ENCODE measurements at regions of chr4 and their contacts with region 1.

Region 1: GRCh38 chr4:145216535-145216934 is 36.1 kb upstream of the OTUD4 start:
- DNase-seq: no peak
- H3K4me3 ChIP-seq: no peak overlapping the region
- H3K27ac ChIP-seq: no peak overlapping the region
- H3K4me1 ChIP-seq: no peaks in the 10 kb centered on the region
- H3K27me3 ChIP-seq: no peaks in the 10 kb centered on the region
- CTCF ChIP-seq: peak in 3 of 4 experiments; percentile 13 to 50 (median 19)
- POLR2A ChIP-seq: no peak

Region 2: DNA sequence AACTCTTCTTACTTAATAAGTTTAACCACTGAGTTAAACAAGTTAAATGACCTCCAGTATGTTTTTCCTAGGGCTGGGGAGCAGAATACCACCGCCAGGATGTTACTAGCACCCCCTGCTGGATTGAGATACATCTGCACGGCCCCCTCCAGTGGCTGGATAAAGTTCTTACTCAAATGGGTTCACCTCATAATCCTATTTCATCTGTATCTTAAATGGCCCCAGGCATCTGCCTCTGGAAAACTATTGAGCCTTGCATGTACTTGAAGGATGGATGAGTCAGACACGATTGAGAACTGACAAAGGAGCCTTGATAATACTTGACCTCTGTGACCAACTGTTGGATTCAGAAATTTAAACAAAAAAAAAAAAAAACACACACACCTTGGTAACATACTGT is 341.2 kb after region 1 on chr4:
- intact Hi-C with region 1: loop called (anchors 5 kb)
- DNase-seq: peak; percentile 46
- H3K4me3 ChIP-seq: no peak overlapping the region
- H3K27ac ChIP-seq: no peak overlapping the region
- H3K4me1 ChIP-seq: no peaks in the 10 kb centered on the region
- H3K27me3 ChIP-seq: no peaks in the 10 kb centered on the region
- CTCF ChIP-seq: peak; percentile 47 to 80 (median 74)
- POLR2A ChIP-seq: no peak

Measured in prostate gland (tissue), 2 donors.